HepG2 (cell line): ENCODE measurements at regions of chr1 and their contacts with region 1.

Region 1: GRCh38 chr1:155172732-155173477 is at the start of gene KRTCAP2:
- DNase-seq: peak; percentile 93
- ATAC-seq: peak; percentile 78
- H3K4me3 ChIP-seq: peak within 1 kb of the TSS; percentile 71 to 92 (median 79)
- H3K27ac ChIP-seq: peak within 1 kb of the TSS; percentile 73
- H3K4me1 ChIP-seq: peaks cover 43% of the 10 kb centered on the region
- H3K27me3 ChIP-seq: 0 out of 5 replicates have a peak, but pooled peaks cover 0 to 1% of the 10 kb centered on the region in 2 experiments
- CTCF ChIP-seq: peak; percentile 98
- EP300 ChIP-seq: peak in 1 of 2 experiments; percentile 37; a peak in 1 of 4 replicates
- POLR2A ChIP-seq: peak; percentile 71 to 77
- RAD21 ChIP-seq: peak; percentile 37; the same call in 1 of the 2 replicates
- total RNA-seq, gene KRTCAP2: 48.5 and 79.4 TPM in 2 replicates

Region 2: GRCh38 chr1:154371436-154371835 is 801.5 kb before region 1 on chr1:
- CTCF ChIA-PET with region 1: no interaction called
- POLR2A ChIA-PET with region 1: no interaction called
- in situ Hi-C with region 1: no loop called
- intact Hi-C with region 1: no loop called
- DNase-seq: no peak
- ATAC-seq: no peak
- H3K4me3 ChIP-seq: no peak overlapping the region; a peak in 1 of 6 replicates
- H3K27ac ChIP-seq: no peak overlapping the region
- H3K4me1 ChIP-seq: peaks cover 11% of the 10 kb centered on the region
- H3K27me3 ChIP-seq: no peaks in the 10 kb centered on the region
- CTCF ChIP-seq: no peak
- EP300 ChIP-seq: no peak
- POLR2A ChIP-seq: no peak
- RAD21 ChIP-seq: no peak

Region 3: DNA sequence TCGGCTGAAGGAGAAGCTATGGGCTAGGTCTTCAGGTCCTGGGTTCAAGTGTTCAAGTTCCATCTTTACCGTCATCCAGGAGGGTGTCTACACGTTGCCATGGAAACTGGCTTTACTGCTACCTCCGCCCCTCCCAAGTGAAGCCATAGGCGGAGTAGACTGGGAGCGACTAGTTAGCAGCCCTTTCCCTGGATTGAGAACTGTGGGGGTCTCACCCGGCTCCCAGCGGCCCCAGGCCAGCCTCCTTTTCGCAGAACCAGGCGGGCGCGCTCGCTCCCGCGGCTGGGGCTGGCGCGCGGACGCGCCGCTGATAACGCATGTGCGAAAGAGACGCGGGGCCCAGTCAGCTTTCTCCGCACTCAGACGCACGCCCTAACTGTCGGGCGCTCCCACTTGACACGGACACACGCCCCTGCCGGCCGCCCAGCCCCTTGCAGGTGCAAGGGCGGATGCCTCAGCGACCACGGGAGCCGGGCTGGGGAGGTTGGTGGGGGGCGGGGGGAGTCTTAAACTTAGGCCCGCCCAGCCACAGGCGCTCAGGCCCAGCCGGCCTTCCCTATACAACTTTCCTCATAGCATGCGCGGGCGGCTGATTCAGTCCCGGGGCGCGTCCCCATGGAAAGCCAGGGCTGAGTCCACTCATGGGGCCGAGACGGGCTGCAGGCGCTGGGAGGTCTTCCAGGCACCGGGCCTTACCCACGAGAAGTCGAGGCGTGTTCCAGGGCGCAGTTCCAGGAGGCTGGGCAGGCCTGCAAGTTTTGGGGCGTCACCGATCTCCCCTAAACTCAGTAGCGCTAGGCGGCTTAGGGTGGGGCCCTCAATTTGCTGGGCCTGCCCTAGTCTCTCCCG is 102.0 kb before region 1 on chr1:
- CTCF ChIA-PET with region 1: no interaction called
- POLR2A ChIA-PET with region 1: no interaction called
- in situ Hi-C with region 1: no loop called
- intact Hi-C with region 1: no loop called
- DNase-seq: peak; percentile 72
- ATAC-seq: peak; percentile 92
- H3K4me3 ChIP-seq: peak overlapping the region; percentile 10 to 63 (median 30); a peak in 5 of 6 replicates
- H3K27ac ChIP-seq: no peak overlapping the region
- H3K4me1 ChIP-seq: peaks cover 19% of the 10 kb centered on the region
- H3K27me3 ChIP-seq: peaks cover 5 to 41% of the 10 kb centered on the region in 2 experiments
- CTCF ChIP-seq: peak; percentile 71
- EP300 ChIP-seq: no peak
- POLR2A ChIP-seq: 0 out of 4 replicates have a peak, but pooled peaks of 1 of the 2 experiments have one; percentile 31
- RAD21 ChIP-seq: no peak

Region 4: GRCh38 chr1:155091071-155091709 is 81.7 kb before region 1 on chr1:
- CTCF ChIA-PET with region 1: interaction called, 165 read pairs
- POLR2A ChIA-PET with region 1: interaction called, 28 read pairs
- in situ Hi-C with region 1: loop called (anchors 5 kb)
- intact Hi-C with region 1: no loop called
- DNase-seq: peak; percentile 78
- ATAC-seq: peak; percentile 79
- H3K4me3 ChIP-seq: peak overlapping the region in 2 of 3 experiments; percentile 9 to 54; a peak in 2 of 6 replicates
- H3K27ac ChIP-seq: peak overlapping the region; percentile 52
- H3K4me1 ChIP-seq: peaks cover 77% of the 10 kb centered on the region
- H3K27me3 ChIP-seq: peaks cover 0 to 2% of the 10 kb centered on the region in 2 experiments; a peak in 1 of 5 replicates
- CTCF ChIP-seq: peak; percentile 98
- EP300 ChIP-seq: no peak; a peak in 1 of 4 replicates
- POLR2A ChIP-seq: no peak
- RAD21 ChIP-seq: peak; percentile 95

Region 5: GRCh38 chr1:155135415-155136028 is 37.4 kb before region 1 on chr1 and contains the start of gene SLC50A1:
- CTCF ChIA-PET with region 1: interaction called, 4 read pairs
- POLR2A ChIA-PET with region 1: interaction called, 17 read pairs
- in situ Hi-C with region 1: no loop called
- intact Hi-C with region 1: no loop called
- DNase-seq: peak; percentile 86
- ATAC-seq: peak; percentile 81
- H3K4me3 ChIP-seq: peak within 1 kb of the TSS; percentile 67 to 84 (median 79)
- H3K27ac ChIP-seq: peak within 1 kb of the TSS; percentile 89
- H3K4me1 ChIP-seq: peaks cover 83% of the 10 kb centered on the region
- H3K27me3 ChIP-seq: no peaks in the 10 kb centered on the region; a peak in 1 of 5 replicates
- CTCF ChIP-seq: no peak
- EP300 ChIP-seq: no peak; a peak in 1 of 4 replicates
- POLR2A ChIP-seq: peak in 1 of 2 experiments; percentile 75; a peak in 2 of 4 replicates
- RAD21 ChIP-seq: peak; percentile 48; the same call in 1 of the 2 replicates
- total RNA-seq, gene SLC50A1: 16.4 and 22.5 TPM in 2 replicates

Region 6: GRCh38 chr1:155193275-155193990 is 20.5 kb after region 1 on chr1:
- CTCF ChIA-PET with region 1: interaction called, 12 read pairs
- POLR2A ChIA-PET with region 1: interaction called, 8 read pairs
- in situ Hi-C with region 1: no loop called
- intact Hi-C with region 1: no loop called
- DNase-seq: peak; percentile 75
- ATAC-seq: peak; percentile 91
- H3K4me3 ChIP-seq: peak overlapping the region; percentile 32 to 72 (median 60)
- H3K27ac ChIP-seq: no peak overlapping the region
- H3K4me1 ChIP-seq: peaks cover 27% of the 10 kb centered on the region
- H3K27me3 ChIP-seq: peaks cover 0 to 44% of the 10 kb centered on the region in 2 experiments; a peak in 4 of 5 replicates
- CTCF ChIP-seq: peak; percentile 96
- EP300 ChIP-seq: no peak
- POLR2A ChIP-seq: no peak
- RAD21 ChIP-seq: no peak; the same call in 1 of the 2 replicates

Region 7: DNA sequence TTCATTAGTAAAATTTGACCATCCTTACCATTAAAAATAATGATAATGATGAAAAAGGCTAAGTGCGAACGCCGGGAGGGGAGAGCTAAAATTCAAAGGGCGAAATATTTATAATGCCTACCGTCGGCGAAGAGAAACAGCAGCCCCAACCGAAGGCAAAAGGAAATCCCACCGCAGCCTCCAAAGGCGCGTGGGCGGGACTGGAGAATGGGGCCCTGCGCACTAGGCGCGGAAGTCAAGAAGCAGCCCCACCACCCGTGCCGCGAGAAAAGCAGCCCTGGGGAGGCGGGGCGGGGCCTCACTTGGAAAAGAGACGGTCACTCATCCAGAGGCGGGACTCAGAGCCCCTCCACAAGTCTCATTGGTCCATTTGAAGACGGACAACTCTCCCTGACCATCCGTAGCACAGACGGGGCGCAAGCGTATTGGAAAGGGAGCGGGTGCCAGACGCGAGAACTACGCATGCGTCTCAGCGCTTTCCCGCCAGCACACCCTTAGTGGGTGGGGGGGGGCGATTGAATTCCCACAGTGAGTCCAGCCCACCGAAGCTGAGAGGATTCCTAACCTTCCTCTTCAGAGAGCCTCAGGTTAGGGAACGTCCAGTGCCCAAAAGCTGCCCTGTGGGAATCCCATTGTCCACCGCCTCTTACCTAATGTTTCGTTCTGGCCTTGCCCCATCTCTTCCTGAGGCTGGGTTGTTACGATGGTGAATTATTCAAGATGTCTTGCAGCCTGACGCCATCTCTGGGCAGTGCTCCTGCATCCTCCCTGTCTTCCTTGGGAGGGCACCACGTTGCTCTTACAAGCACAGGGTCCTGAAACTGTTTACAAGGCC is 54.6 kb after region 1 on chr1:
- CTCF ChIA-PET with region 1: interaction called, 6 read pairs
- POLR2A ChIA-PET with region 1: interaction called, 3 read pairs
- in situ Hi-C with region 1: no loop called
- intact Hi-C with region 1: loop called (anchors 1 kb)
- DNase-seq: peak; percentile 98
- ATAC-seq: peak; percentile 98
- H3K4me3 ChIP-seq: peak overlapping the region; percentile 67 to 69 (median 69)
- H3K27ac ChIP-seq: peak overlapping the region; percentile 66
- H3K4me1 ChIP-seq: peaks cover 32% of the 10 kb centered on the region
- H3K27me3 ChIP-seq: no peaks in the 10 kb centered on the region
- CTCF ChIP-seq: no peak
- EP300 ChIP-seq: peak in 1 of 2 experiments; percentile 6; a peak in 1 of 4 replicates
- POLR2A ChIP-seq: peak; percentile 70 to 81
- RAD21 ChIP-seq: no peak

Region 8: GRCh38 chr1:155241069-155241679 is 68.3 kb after region 1 on chr1:
- CTCF ChIA-PET with region 1: no interaction called
- POLR2A ChIA-PET with region 1: no interaction called
- in situ Hi-C with region 1: no loop called
- intact Hi-C with region 1: no loop called
- DNase-seq: peak; percentile 80
- ATAC-seq: peak; percentile 87
- H3K4me3 ChIP-seq: peak overlapping the region; percentile 48 to 63 (median 61)
- H3K27ac ChIP-seq: no peak overlapping the region
- H3K4me1 ChIP-seq: peaks cover 15% of the 10 kb centered on the region
- H3K27me3 ChIP-seq: no peaks in the 10 kb centered on the region
- CTCF ChIP-seq: no peak
- EP300 ChIP-seq: peak in 1 of 2 experiments; percentile 19; a peak in 1 of 4 replicates
- POLR2A ChIP-seq: peak in 1 of 2 experiments; percentile 22; a peak in 1 of 4 replicates
- RAD21 ChIP-seq: no peak

Region 9: GRCh38 chr1:155392898-155393411 is 220.1 kb after region 1 on chr1:
- CTCF ChIA-PET with region 1: no interaction called
- POLR2A ChIA-PET with region 1: no interaction called
- in situ Hi-C with region 1: no loop called
- intact Hi-C with region 1: no loop called
- DNase-seq: no peak
- ATAC-seq: no peak
- H3K4me3 ChIP-seq: no peak overlapping the region
- H3K27ac ChIP-seq: no peak overlapping the region
- H3K4me1 ChIP-seq: no peaks in the 10 kb centered on the region
- H3K27me3 ChIP-seq: no peaks in the 10 kb centered on the region
- CTCF ChIP-seq: no peak
- EP300 ChIP-seq: no peak
- POLR2A ChIP-seq: no peak
- RAD21 ChIP-seq: no peak